Mammary epithelial cell (primary cell): ENCODE measurements at regions of chr2 and their contacts with region 1.

Region 1: GRCh38 chr2:203535078-203535783 is at the start of gene RAPH1:
- DNase-seq: peak; percentile 94
- H3K4me3 ChIP-seq: peak within 1 kb of the TSS; percentile 89 to 96 (median 95)
- H3K27ac ChIP-seq: peak within 1 kb of the TSS; percentile 85
- H3K4me1 ChIP-seq: peaks cover 26% of the 10 kb centered on the region
- H3K27me3 ChIP-seq: no peaks in the 10 kb centered on the region
- CTCF ChIP-seq: no peak
- total RNA-seq, gene RAPH1: 12.5 to 42.2 TPM

Region 2: GRCh38 chr2:203492965-203493364 is 42.3 kb before region 1 on chr2:
- CTCF ChIA-PET with region 1: no interaction called
- dilution Hi-C with region 1: no loop called
- in situ Hi-C with region 1: no loop called
- intact Hi-C with region 1: loop called (anchors 2 kb)
- DNase-seq: no peak
- H3K4me3 ChIP-seq: no peak overlapping the region
- H3K27ac ChIP-seq: no peak overlapping the region
- H3K4me1 ChIP-seq: peaks cover 12% of the 10 kb centered on the region
- H3K27me3 ChIP-seq: no peaks in the 10 kb centered on the region
- CTCF ChIP-seq: no peak

Region 3: GRCh38 chr2:203578759-203579643 is 43.8 kb after region 1 on chr2:
- CTCF ChIA-PET with region 1: no interaction called
- dilution Hi-C with region 1: loop called (anchors 5 kb)
- in situ Hi-C with region 1: no loop called
- intact Hi-C with region 1: loop called (anchors 1 kb)
- DNase-seq: peak; percentile 99
- H3K4me3 ChIP-seq: no peak overlapping the region
- H3K27ac ChIP-seq: peak overlapping the region; percentile 65
- H3K4me1 ChIP-seq: peaks cover 32% of the 10 kb centered on the region
- H3K27me3 ChIP-seq: no peaks in the 10 kb centered on the region
- CTCF ChIP-seq: no peak

Region 4: GRCh38 chr2:203683932-203684556 is 148.8 kb after region 1 on chr2:
- CTCF ChIA-PET with region 1: no interaction called
- dilution Hi-C with region 1: loop called (anchors 5 kb)
- in situ Hi-C with region 1: no loop called
- intact Hi-C with region 1: no loop called
- DNase-seq: peak; percentile 99
- H3K4me3 ChIP-seq: no peak overlapping the region
- H3K27ac ChIP-seq: peak overlapping the region; percentile 97
- H3K4me1 ChIP-seq: peaks cover 72% of the 10 kb centered on the region
- H3K27me3 ChIP-seq: no peaks in the 10 kb centered on the region
- CTCF ChIP-seq: no peak

Region 5: DNA sequence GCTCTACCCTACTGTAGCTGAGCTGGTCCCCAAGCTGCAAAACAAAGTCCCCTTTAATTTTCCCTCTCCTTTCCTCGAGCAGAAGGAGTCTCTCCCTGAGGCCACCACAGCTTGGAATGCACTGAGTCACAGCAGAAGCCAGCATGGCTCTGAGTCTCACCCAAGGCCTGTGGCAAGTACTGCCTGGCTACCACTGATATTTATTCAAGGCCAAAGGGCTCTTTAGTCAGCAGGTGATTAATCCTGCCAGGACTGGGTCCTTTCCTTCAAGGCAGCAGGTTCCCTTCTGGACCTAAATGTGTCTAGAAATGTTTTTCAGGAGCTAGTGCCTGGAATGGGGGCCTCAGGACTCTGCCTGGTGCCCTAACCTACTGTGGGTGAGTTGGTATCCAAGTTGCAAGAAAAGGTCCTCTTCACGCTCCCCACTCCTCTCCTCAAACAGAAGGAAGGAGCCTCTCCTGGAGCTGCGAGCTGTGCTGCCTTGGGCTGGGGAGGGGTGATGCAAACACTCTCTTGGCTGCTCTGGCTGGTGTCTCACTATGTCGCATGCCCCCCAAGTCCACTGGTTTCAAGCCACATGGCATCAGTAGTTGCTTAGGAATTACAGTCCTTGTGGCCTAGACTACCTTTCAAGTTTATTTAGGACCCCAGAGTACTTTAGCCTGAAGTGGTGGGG is 224.6 kb after region 1 on chr2:
- CTCF ChIA-PET with region 1: no interaction called
- dilution Hi-C with region 1: no loop called
- in situ Hi-C with region 1: no loop called
- intact Hi-C with region 1: loop called (anchors 1 kb)
- DNase-seq: peak; percentile 93
- H3K4me3 ChIP-seq: no peak overlapping the region
- H3K27ac ChIP-seq: peak overlapping the region; percentile 67
- H3K4me1 ChIP-seq: peaks cover 25% of the 10 kb centered on the region
- H3K27me3 ChIP-seq: no peaks in the 10 kb centered on the region
- CTCF ChIP-seq: no peak